ENCODE measurements at regions of chr12 and their contacts with region 1.

Region 1: GRCh38 chr12:22059976-22060647 is 14.1 kb downstream of the CMAS start:
- DNase-seq: no peak
- H3K4me3 Mint-ChIP-seq: no peak overlapping the region
- H3K27ac Mint-ChIP-seq: no peak overlapping the region
- H3K4me1 Mint-ChIP-seq: no peaks in the 10 kb centered on the region
- H3K27me3 Mint-ChIP-seq: no peaks in the 10 kb centered on the region
- CTCF ChIP-seq: no peak

Region 2: GRCh38 chr12:22670762-22671161 is 610.6 kb after region 1 on chr12:
- CTCF ChIA-PET with region 1: no interaction called
- intact Hi-C with region 1: loop called (anchors 10 kb)
- DNase-seq: no peak
- H3K4me3 Mint-ChIP-seq: no peak overlapping the region
- H3K27ac Mint-ChIP-seq: no peak overlapping the region
- H3K4me1 Mint-ChIP-seq: no peaks in the 10 kb centered on the region
- H3K27me3 Mint-ChIP-seq: no peaks in the 10 kb centered on the region
- CTCF ChIP-seq: no peak

Measured in Calu3 (cell line).